ENCODE measurements at regions of chr7 and their contacts with region 1.

Region 1: DNA sequence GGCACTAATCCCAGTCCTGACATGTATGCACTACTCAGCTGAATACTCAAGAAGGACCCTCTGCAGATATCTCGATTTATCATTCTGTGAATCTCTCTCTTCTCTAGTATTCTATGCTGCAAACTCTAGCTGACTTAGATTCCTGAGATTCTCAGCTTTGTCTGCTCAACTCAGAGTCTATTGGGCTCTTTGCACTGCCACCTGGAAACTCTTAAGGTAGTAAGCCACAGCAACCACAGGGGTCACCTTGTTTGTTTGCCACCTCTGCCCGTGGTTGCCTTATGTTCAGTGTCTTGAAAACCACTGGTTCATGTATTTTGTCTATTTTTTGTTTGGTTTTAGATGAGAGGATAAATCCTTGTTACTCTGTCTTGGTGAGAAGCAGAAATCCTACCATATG is 72.9 kb downstream of the SP8 start:
- DNase-seq: no peak
- H3K4me3 ChIP-seq: no peak overlapping the region
- H3K27ac ChIP-seq: no peak overlapping the region
- H3K27me3 ChIP-seq: peaks cover 0 to 2% (median 0%) of the 10 kb centered on the region in 45 donors
- CTCF ChIP-seq: no peak

Region 2: GRCh38 chr7:20700453-20701227 is 13.2 kb before region 1 on chr7:
- intact Hi-C with region 1: loop called in 1 of 2 experiments (anchors 1 kb)
- DNase-seq: no peak
- H3K4me3 ChIP-seq: no peak overlapping the region
- H3K27ac ChIP-seq: no peak overlapping the region
- H3K27me3 ChIP-seq: peaks cover 0 to 11% (median 0%) of the 10 kb centered on the region in 45 donors
- CTCF ChIP-seq: no peak

Region 3: DNA sequence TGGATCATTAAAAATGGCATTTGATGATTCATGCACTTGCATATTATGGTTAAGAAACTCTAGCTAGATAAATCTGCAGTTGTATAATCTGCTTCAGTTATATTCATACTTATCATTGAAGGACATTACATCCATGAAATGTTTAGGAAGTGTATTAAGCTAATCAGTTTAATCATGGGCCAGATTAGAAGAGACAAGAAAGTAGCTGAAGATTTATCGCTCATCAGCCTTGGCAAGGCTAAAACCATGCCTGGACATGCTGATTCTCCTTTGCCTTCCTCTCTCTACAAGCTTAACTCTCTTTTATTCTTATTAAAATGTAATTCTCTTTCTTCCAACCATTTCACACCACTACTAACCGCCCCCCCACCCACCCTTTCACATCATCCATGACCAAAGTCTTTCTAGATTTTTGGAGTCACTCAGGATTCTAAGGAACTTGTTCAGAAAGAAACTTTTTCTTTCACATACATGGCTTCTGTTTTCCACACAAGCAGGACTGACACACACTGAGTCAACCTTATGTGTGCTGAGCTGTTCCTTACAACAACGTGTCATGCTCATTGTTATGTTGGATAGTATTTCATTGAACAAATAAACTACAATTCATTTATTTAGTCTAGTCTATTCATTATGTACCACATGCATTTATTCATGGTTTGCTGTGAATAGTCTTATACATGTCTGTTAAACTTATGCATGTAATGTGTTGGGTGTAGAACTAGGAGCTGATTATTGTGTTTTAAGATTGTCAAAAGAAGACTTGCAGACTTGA is 300.2 kb after region 1 on chr7:
- intact Hi-C with region 1: no loop called
- DNase-seq: no peak
- H3K4me3 ChIP-seq: no peak overlapping the region
- H3K27ac ChIP-seq: no peak overlapping the region
- H3K27me3 ChIP-seq: no peaks in the 10 kb centered on the region
- CTCF ChIP-seq: no peak